SK-N-SH (cell line): ENCODE measurements at regions of chr7 and their contacts with region 1.

Region 1: GRCh38 chr7:24381894-24382505 is 98.0 kb downstream of the NPY start:
- DNase-seq: peak; percentile 74
- H3K4me3 ChIP-seq: no peak overlapping the region
- H3K27ac ChIP-seq: peak overlapping the region in 1 of 2 experiments; percentile 59; a peak in 1 of 4 replicates
- H3K4me1 ChIP-seq: peaks cover 0 to 3% of the 10 kb centered on the region in 2 experiments; a peak in 1 of 4 replicates
- H3K27me3 ChIP-seq: no peaks in the 10 kb centered on the region
- CTCF ChIP-seq: peak; percentile 65
- EP300 ChIP-seq: no peak
- RAD21 ChIP-seq: peak; percentile 95

Region 2: DNA sequence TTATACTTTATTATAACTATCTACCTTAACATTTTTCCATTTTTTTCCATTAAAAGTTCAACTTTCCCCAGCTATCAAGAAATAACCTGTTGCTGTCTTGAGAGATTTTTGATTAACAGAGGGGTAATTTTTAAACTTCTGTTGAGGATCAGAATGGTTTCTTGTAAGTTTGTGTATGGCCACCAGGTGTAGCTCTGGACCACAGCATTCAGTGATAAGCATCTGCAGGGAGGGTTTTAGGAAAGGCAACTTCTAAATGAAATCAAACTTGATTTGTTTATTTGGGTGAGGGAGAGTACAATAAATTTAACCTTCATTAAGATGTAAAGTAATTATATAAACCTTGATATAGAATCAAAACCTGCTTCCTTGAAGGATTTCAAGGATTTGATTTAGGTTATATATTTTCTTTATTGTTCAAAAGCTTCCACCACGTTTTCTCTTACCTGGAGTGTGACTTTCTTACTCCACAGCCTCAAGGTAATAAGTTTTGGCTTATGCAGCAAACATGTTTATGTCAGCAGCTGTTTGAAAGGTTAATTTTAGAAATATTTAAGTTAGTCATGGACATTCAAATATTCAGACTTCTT is 518.7 kb before region 1 on chr7:
- CTCF ChIA-PET with region 1: interaction called, 95 read pairs
- POLR2A ChIA-PET with region 1: no interaction called
- DNase-seq: peak; percentile 53
- H3K4me3 ChIP-seq: no peak overlapping the region
- H3K27ac ChIP-seq: peak overlapping the region in 1 of 2 experiments; percentile 16; a peak in 1 of 4 replicates
- H3K4me1 ChIP-seq: peaks cover 0 to 6% of the 10 kb centered on the region in 2 experiments; a peak in 1 of 4 replicates
- H3K27me3 ChIP-seq: no peaks in the 10 kb centered on the region
- CTCF ChIP-seq: peak; percentile 96
- EP300 ChIP-seq: no peak
- RAD21 ChIP-seq: peak; percentile 99

Region 3: GRCh38 chr7:23938937-23939552 is 443.0 kb before region 1 on chr7:
- CTCF ChIA-PET with region 1: interaction called, 27 read pairs
- POLR2A ChIA-PET with region 1: no interaction called
- DNase-seq: peak; percentile 51
- H3K4me3 ChIP-seq: no peak overlapping the region
- H3K27ac ChIP-seq: no peak overlapping the region
- H3K4me1 ChIP-seq: no peaks in the 10 kb centered on the region; a peak in 1 of 4 replicates
- H3K27me3 ChIP-seq: no peaks in the 10 kb centered on the region
- CTCF ChIP-seq: peak; percentile 50; the same call in 1 of the 2 replicates
- EP300 ChIP-seq: no peak
- RAD21 ChIP-seq: peak; percentile 78

Region 4: DNA sequence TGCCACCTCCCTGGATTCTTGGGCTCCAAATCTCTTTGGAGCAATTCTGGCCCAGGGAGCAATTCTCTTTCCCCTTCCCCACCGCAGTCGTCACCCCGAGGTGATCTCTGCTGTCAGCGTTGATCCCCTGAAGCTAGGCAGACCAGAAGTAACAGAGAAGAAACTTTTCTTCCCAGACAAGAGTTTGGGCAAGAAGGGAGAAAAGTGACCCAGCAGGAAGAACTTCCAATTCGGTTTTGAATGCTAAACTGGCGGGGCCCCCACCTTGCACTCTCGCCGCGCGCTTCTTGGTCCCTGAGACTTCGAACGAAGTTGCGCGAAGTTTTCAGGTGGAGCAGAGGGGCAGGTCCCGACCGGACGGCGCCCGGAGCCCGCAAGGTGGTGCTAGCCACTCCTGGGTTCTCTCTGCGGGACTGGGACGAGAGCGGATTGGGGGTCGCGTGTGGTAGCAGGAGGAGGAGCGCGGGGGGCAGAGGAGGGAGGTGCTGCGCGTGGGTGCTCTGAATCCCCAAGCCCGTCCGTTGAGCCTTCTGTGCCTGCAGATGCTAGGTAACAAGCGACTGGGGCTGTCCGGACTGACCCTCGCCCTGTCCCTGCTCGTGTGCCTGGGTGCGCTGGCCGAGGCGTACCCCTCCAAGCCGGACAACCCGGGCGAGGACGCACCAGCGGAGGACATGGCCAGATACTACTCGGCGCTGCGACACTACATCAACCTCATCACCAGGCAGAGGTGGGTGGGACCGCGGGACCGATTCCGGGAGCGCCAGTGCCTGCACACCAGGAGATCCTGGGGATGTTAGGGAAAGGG is 97.1 kb before region 1 on chr7:
- CTCF ChIA-PET with region 1: interaction called, 42 read pairs
- POLR2A ChIA-PET with region 1: no interaction called
- DNase-seq: peak; percentile 65
- H3K4me3 ChIP-seq: peak overlapping the region in 1 of 2 experiments; percentile 52; a peak in 2 of 4 replicates
- H3K27ac ChIP-seq: peak overlapping the region in 1 of 2 experiments; percentile 47; a peak in 2 of 4 replicates
- H3K4me1 ChIP-seq: peaks cover 0 to 16% of the 10 kb centered on the region in 2 experiments; a peak in 2 of 4 replicates
- H3K27me3 ChIP-seq: peaks cover 41% of the 10 kb centered on the region
- CTCF ChIP-seq: no peak
- EP300 ChIP-seq: no peak
- RAD21 ChIP-seq: peak; percentile 19; the same call in 1 of the 2 replicates

Region 5: GRCh38 chr7:24301703-24302102 is 80.3 kb before region 1 on chr7:
- CTCF ChIA-PET with region 1: interaction called, 13 read pairs
- POLR2A ChIA-PET with region 1: no interaction called
- DNase-seq: no peak
- H3K4me3 ChIP-seq: no peak overlapping the region
- H3K27ac ChIP-seq: no peak overlapping the region
- H3K4me1 ChIP-seq: peaks cover 0 to 4% of the 10 kb centered on the region in 2 experiments; a peak in 2 of 4 replicates
- H3K27me3 ChIP-seq: no peaks in the 10 kb centered on the region
- CTCF ChIP-seq: no peak
- EP300 ChIP-seq: no peak
- RAD21 ChIP-seq: no peak

Region 6: DNA sequence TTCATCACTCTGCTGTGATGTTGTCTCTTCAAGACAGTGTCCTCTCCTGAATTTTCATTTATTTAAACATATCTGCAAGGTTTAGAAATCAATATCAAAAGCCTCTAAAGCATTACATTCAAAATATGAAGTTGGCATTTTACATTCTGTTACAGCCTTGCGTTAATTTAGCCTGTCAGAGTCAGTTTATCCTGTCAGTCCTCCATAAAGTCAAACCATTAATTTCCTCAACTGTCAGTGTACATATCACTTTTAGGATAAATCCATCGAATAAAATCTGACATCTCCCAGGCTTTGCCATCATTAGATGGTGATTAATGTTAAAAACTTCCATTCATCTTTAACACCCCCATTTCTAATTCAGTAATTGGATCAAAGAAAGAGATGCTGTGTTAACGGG is 21.0 kb before region 1 on chr7:
- CTCF ChIA-PET with region 1: interaction called, 10 read pairs
- POLR2A ChIA-PET with region 1: no interaction called
- DNase-seq: no peak
- H3K4me3 ChIP-seq: no peak overlapping the region
- H3K27ac ChIP-seq: no peak overlapping the region
- H3K4me1 ChIP-seq: no peaks in the 10 kb centered on the region; a peak in 1 of 4 replicates
- H3K27me3 ChIP-seq: no peaks in the 10 kb centered on the region
- CTCF ChIP-seq: no peak
- EP300 ChIP-seq: no peak
- RAD21 ChIP-seq: no peak

Region 7: DNA sequence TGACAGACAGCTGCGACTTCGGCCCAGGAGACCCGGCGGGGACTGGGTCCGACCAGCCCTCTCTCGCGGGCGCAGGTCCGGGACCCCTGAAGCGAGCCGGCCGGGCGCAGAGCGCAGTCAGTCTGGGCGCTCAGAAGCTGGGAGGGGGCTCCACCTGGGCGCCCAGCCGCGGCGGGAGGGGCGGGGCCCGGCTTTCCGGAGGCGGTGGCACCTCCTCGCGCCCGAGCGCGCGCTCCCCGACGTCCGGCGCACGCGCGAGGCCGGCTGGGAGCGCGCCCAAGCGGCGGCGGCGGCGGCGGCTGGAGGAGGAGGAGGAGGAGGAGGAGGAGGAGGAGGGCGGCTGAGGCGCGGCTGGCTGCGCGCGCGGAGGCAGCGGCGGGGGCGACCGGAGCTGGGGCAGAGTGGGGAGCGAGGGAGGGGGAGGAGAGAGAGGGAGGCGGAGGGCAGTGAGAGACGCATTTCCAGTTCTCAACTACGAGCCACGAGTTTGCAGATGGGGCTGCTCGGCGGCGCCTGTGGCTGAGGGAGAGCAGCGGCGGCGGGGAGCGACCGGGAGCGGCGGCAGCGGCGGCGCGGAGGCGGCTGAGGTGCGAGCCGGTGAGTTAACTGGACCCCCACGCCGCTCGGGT is 191.1 kb after region 1 on chr7 and contains the start of gene PALS2:
- CTCF ChIA-PET with region 1: interaction called, 10 read pairs
- POLR2A ChIA-PET with region 1: no interaction called
- DNase-seq: peak; percentile 95
- H3K4me3 ChIP-seq: peak within 1 kb of the TSS; percentile 93 to 98
- H3K27ac ChIP-seq: peak within 1 kb of the TSS; percentile 20 to 61; a peak in 3 of 4 replicates
- H3K4me1 ChIP-seq: peaks cover 0 to 31% of the 10 kb centered on the region in 2 experiments; a peak in 2 of 4 replicates
- H3K27me3 ChIP-seq: peaks cover 12% of the 10 kb centered on the region; the same call in 1 of the 2 replicates
- CTCF ChIP-seq: no peak; the same call in 1 of the 2 replicates
- EP300 ChIP-seq: 0 out of 4 replicates have a peak, but pooled peaks of 1 of the 2 experiments have one; percentile 11
- RAD21 ChIP-seq: no peak
- polyA plus RNA-seq, gene PALS2: 6.1 and 6.9 TPM in 2 replicates